Kidney (tissue), 22 donors: ENCODE measurements at regions of chr3 and their contacts with region 1.

Region 1: GRCh38 chr3:56799251-56799882 is 2.4 kb downstream of the ARHGEF3 start:
- DNase-seq: peak in 2 of 5 donors; percentile 85 to 89
- H3K4me3 ChIP-seq: peak overlapping the region; percentile 91 to 99 (median 96)
- H3K27ac ChIP-seq: peak overlapping the region; percentile 86 to 88
- H3K4me1 ChIP-seq: peaks cover 2 to 17% (median 15%) of the 10 kb centered on the region in 3 donors
- H3K27me3 ChIP-seq: no peaks in the 10 kb centered on the region
- CTCF ChIP-seq: peak; percentile 59

Region 2: GRCh38 chr3:56711344-56711743 is 88.0 kb before region 1 on chr3:
- intact Hi-C with region 1: loop called (anchors 10 kb)
- DNase-seq: no peak
- H3K4me3 ChIP-seq: no peak overlapping the region
- H3K27ac ChIP-seq: no peak overlapping the region
- H3K4me1 ChIP-seq: no peaks in the 10 kb centered on the region
- H3K27me3 ChIP-seq: no peaks in the 10 kb centered on the region
- CTCF ChIP-seq: no peak